Activated CD4-positive, alpha-beta T cell treated with anti-CD3 and anti-CD28 coated beads, Interleukin-2, amount 10 ng/mL, durations not matched to agents 7 days and 5 days (primary cell): ENCODE measurements at regions of chr10 and their contacts with region 1.

Region 1: GRCh38 chr10:63268798-63269503 is 135.8 kb downstream of the NRBF2 start:
- DNase-seq: peak; percentile 89
- H3K4me3 Mint-ChIP-seq: peak overlapping the region; percentile 91
- H3K27ac Mint-ChIP-seq: peak overlapping the region; percentile 99
- H3K4me1 Mint-ChIP-seq: peaks cover 28% of the 10 kb centered on the region
- H3K27me3 Mint-ChIP-seq: no peaks in the 10 kb centered on the region

Region 2: GRCh38 chr10:63256009-63256773 is 12.8 kb before region 1 on chr10:
- CTCF ChIA-PET with region 1: interaction called, 12 read pairs
- POLR2A ChIA-PET with region 1: interaction called, 4 read pairs
- DNase-seq: no peak
- H3K4me3 Mint-ChIP-seq: no peak overlapping the region
- H3K27ac Mint-ChIP-seq: no peak overlapping the region
- H3K4me1 Mint-ChIP-seq: peaks cover 66% of the 10 kb centered on the region
- H3K27me3 Mint-ChIP-seq: no peaks in the 10 kb centered on the region

Region 3: DNA sequence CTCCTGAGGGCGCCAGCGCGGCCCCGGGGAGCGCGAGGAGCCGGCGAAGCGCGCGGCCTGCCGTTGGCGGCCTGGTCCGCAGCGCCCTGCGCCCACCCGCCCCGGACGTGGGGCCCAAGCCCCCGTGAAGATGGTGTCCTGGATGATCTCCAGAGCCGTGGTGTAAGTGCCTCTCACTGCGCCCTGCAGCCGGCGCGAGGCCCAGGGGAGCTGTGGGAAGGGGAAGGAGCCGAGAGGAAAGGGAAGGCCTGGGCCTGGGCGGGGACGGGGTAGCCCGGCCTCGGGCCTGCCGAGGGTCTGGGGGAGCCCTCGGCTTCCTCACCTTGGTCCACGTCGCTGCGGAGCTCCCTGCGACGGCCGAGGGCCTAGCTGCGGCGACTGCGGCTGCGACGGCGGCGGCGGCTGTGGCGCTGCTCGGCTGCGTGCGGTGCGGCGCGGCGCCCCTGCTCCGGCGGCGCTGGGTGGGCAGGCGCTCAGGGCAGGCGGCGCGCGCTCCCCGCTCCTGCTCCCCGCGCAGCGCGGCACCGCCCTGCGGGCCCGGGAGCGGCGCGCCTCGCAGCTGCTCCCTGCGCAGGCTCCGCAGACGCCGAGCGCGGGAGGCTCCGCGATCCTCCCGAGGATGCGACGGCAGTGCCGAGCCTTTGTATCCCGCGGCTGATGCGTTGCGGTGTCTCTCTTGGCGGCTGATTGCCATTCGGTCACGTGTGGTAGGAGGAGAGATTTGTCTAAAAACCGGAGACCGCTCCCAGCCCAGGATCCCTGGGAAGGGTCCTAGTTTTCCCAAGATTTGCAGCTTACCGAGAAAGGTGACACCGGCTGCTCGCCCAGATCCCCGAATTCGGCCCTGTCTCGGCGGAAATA is 252.7 kb after region 1 on chr10:
- CTCF ChIA-PET with region 1: interaction called, 5 read pairs
- POLR2A ChIA-PET with region 1: interaction called, 10 read pairs
- DNase-seq: peak; percentile 59
- H3K4me3 Mint-ChIP-seq: peak overlapping the region; percentile 81
- H3K27ac Mint-ChIP-seq: peak overlapping the region; percentile 97
- H3K4me1 Mint-ChIP-seq: peaks cover 62% of the 10 kb centered on the region
- H3K27me3 Mint-ChIP-seq: no peaks in the 10 kb centered on the region

Region 4: DNA sequence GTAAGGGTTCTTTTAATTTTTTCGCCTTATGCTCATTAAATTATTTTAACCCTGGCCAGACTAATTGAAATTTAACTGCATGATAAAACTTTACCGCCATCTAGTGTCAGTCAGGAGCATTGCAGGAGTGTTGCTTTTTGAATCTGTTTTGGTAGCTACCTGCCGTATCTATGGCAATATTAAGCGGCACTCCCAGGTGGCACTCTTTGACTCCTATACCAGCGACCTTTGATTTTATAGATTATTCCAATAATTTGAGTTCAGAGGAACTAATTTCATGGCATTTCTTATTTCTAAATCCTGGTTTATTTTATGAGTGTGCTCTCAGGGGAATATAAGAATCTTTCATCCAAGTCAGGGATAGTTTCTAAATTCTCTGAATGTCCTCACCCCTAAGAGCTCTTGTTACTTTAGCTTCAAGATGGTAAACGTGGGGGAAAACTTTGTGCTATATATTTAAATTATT is 451.2 kb after region 1 on chr10:
- CTCF ChIA-PET with region 1: interaction called, 11 read pairs
- POLR2A ChIA-PET with region 1: no interaction called
- DNase-seq: peak; percentile 58
- H3K4me3 Mint-ChIP-seq: no peak overlapping the region
- H3K27ac Mint-ChIP-seq: no peak overlapping the region
- H3K4me1 Mint-ChIP-seq: peaks cover 25% of the 10 kb centered on the region
- H3K27me3 Mint-ChIP-seq: peaks cover 6% of the 10 kb centered on the region